ENCODE measurements at regions of chrX and their contacts with region 1.

Region 1: DNA sequence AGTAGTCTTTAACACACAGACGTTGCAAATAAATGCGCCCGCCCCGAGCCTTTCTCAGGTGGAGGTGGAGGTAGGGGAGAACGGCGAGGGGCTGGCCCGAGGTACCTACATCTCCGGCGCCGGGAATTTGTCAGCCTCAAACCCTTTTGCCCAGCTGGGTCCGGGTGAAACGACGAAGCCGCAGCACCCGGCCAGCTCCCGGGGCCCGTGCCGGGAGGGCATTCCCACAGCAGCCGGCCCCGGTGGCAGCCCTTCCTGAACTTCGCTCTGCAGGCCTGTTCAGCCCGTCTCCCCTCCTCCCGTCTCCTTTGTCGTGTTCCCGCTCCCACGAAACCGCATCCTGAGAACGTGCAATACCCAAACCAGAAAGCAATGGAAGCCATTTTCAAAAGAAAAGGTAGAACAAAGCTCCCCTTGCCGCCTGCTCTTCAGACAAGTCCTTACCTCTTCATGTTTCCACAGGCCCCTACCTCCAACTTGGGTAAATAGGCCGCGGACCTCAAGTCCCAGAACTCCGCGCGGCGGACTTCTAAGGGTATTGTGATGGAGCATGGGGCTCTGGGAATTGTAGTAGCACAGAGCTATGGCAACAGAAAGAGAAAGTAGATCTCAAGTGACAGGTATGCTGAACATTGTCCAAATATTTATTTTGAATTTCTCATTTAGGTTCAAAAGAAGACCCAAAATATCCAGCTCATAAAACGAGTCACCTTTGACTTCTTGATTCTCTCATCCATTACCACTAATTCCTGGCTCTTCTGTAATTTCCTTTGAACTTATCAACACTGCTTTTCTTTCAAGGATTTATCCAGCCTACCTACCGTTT is at the start of gene RBM41:
- DNase-seq: peak; percentile 68
- H3K4me3 Mint-ChIP-seq: peak within 1 kb of the TSS; percentile 100
- H3K27ac Mint-ChIP-seq: peak within 1 kb of the TSS; percentile 99
- H3K4me1 Mint-ChIP-seq: peaks cover 26% of the 10 kb centered on the region
- H3K27me3 Mint-ChIP-seq: no peaks in the 10 kb centered on the region
- total RNA-seq, gene RBM41: 15.4 and 16.2 TPM in 2 replicates

Region 2: GRCh38 chrX:106894392-106894909 is 224.1 kb before region 1 on chrX:
- intact Hi-C with region 1: no loop called
- DNase-seq: peak; percentile 11
- H3K4me3 Mint-ChIP-seq: no peak overlapping the region
- H3K27ac Mint-ChIP-seq: no peak overlapping the region
- H3K4me1 Mint-ChIP-seq: no peaks in the 10 kb centered on the region
- H3K27me3 Mint-ChIP-seq: no peaks in the 10 kb centered on the region

Region 3: GRCh38 chrX:107154787-107155620 is 36.5 kb after region 1 on chrX:
- intact Hi-C with region 1: loop called (anchors 2 kb)
- DNase-seq: no peak
- H3K4me3 Mint-ChIP-seq: peak overlapping the region; percentile 69
- H3K27ac Mint-ChIP-seq: peak overlapping the region; percentile 33
- H3K4me1 Mint-ChIP-seq: peaks cover 10% of the 10 kb centered on the region
- H3K27me3 Mint-ChIP-seq: no peaks in the 10 kb centered on the region

Region 4: GRCh38 chrX:108091266-108091877 is 972.8 kb after region 1 on chrX and contains the starts of genes ATG4A and PSMD10:
- intact Hi-C with region 1: loop called (anchors 2 kb)
- DNase-seq: peak; percentile 88
- H3K4me3 Mint-ChIP-seq: no peak within 1 kb of the TSS
- H3K27ac Mint-ChIP-seq: no peak within 1 kb of the TSS
- H3K4me1 Mint-ChIP-seq: peaks cover 9% of the 10 kb centered on the region
- H3K27me3 Mint-ChIP-seq: no peaks in the 10 kb centered on the region
- total RNA-seq, gene ATG4A: 8.0 and 9.4 TPM in 2 replicates
- total RNA-seq, gene PSMD10: 43.6 and 48.3 TPM in 2 replicates